SK-N-SH (cell line): ENCODE measurements at regions of chr1 and their contacts with region 1.

Region 1: GRCh38 chr1:48202030-48202752 is 20.3 kb upstream of the SLC5A9 start:
- DNase-seq: peak; percentile 63
- H3K4me3 ChIP-seq: peak overlapping the region in 1 of 2 experiments; percentile 49; a peak in 1 of 4 replicates
- H3K27ac ChIP-seq: no peak overlapping the region
- H3K4me1 ChIP-seq: no peaks in the 10 kb centered on the region
- H3K27me3 ChIP-seq: peaks cover 4% of the 10 kb centered on the region; the same call in 1 of the 2 replicates
- CTCF ChIP-seq: peak; percentile 91
- EP300 ChIP-seq: no peak
- RAD21 ChIP-seq: peak; percentile 82

Region 2: DNA sequence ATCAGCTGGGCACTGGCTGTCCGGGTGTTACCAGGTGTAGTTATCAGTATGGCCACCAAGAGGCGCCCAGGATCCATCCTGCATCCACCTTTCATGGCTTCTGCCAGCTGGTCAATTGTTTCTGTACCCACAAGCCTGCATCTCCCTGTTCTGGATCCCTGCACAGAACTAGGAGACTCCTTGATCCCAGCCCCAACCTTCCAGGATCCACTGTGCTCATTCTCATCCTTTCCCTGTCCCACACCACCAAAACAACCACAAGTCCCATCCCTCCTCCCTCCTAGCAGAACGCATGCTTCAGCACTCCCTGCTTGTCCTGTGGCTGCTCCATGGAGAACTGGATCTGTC is 813.3 kb before region 1 on chr1:
- CTCF ChIA-PET with region 1: no interaction called
- POLR2A ChIA-PET with region 1: no interaction called
- DNase-seq: peak; percentile 80
- H3K4me3 ChIP-seq: no peak overlapping the region
- H3K27ac ChIP-seq: no peak overlapping the region
- H3K4me1 ChIP-seq: peaks cover 0 to 10% of the 10 kb centered on the region in 2 experiments; a peak in 1 of 4 replicates
- H3K27me3 ChIP-seq: no peaks in the 10 kb centered on the region
- CTCF ChIP-seq: peak; percentile 69
- EP300 ChIP-seq: no peak
- RAD21 ChIP-seq: peak; percentile 84

Region 3: GRCh38 chr1:47818682-47819573 is 383.3 kb before region 1 on chr1:
- CTCF ChIA-PET with region 1: no interaction called
- POLR2A ChIA-PET with region 1: no interaction called
- DNase-seq: peak; percentile 53
- H3K4me3 ChIP-seq: no peak overlapping the region
- H3K27ac ChIP-seq: no peak overlapping the region
- H3K4me1 ChIP-seq: peaks cover 0 to 22% of the 10 kb centered on the region in 2 experiments; a peak in 1 of 4 replicates
- H3K27me3 ChIP-seq: no peaks in the 10 kb centered on the region
- CTCF ChIP-seq: no peak
- EP300 ChIP-seq: no peak
- RAD21 ChIP-seq: no peak

Region 4: DNA sequence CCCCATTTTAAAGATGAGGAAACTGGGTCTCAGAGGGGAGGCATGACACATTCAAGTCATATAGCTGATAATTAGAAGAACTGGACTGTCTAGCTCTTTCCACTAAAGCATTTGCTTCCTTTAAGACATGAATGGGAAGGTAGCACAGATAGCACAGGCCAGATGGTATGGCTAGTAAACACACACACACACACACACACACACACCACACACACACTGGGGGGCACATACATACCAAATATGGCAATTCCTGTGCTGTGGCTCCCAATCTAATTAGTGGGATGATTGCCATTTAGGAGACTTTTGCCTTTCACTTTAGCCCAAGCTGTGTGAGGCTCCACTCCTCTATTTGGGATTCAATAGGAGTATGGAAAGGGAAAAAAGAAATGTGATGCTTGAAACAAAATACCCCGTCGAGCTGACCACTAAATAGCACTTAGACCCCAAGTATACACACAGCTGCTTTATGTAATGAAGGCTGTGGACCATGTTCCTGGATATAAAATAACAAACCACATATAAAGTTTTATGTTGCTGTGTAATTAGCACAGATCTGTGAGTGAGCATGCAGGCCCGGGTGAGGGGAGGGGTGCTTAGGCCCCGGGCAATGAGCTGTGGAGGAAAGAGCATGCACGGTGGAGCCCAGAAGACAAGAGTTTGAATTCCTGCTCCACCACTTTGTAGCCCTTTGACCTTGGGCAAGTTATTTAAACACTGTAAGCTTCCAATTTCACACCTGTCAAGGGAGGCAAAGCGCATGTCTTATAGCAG is 198.3 kb before region 1 on chr1:
- CTCF ChIA-PET with region 1: no interaction called
- POLR2A ChIA-PET with region 1: no interaction called
- DNase-seq: no peak
- H3K4me3 ChIP-seq: no peak overlapping the region
- H3K27ac ChIP-seq: no peak overlapping the region
- H3K4me1 ChIP-seq: no peaks in the 10 kb centered on the region
- H3K27me3 ChIP-seq: no peaks in the 10 kb centered on the region; the same call in 1 of the 2 replicates
- CTCF ChIP-seq: no peak
- EP300 ChIP-seq: no peak
- RAD21 ChIP-seq: no peak

Region 5: DNA sequence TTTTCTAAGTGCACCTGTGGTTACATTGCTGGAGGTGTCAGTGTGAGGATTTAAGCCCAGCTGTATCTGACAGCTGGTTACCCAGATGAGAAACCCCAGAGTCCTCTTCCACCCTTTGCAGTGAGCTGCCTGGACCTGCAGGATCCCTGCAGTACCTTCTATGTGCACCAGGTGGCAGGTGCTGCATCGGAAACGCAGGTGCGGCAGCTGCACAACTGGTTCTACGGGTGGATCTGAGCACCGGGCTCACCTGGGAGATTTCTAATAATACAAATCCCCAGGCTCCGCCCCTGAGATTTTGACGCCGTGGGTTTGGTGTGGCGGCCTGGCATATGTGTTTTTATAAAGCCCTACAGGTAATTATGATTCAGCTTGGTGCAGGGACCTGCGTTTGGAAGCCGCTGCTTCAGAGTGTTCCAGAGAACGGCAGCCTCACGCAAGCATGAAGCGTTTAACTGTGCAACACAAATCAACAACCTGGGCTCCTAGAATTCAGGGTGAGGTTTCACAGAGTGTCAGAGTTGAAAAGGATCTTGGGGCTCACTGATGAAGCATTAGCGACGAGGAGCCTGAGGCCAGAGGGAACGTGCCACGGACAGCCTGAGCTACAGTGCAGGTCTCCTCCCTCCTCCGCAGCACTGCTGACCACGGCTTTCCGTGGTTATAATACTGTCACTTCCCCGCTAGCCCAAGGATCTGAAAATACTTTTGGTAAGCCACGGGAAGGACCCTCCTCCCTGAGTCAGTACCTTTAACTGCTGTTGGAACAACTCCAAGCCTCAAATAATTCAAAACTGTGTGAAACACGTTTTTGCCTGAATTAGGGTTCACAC is 108.3 kb before region 1 on chr1:
- CTCF ChIA-PET with region 1: interaction called, 57 read pairs
- POLR2A ChIA-PET with region 1: no interaction called
- DNase-seq: peak; percentile 85
- H3K4me3 ChIP-seq: peak overlapping the region; percentile 7 to 44; a peak in 2 of 4 replicates
- H3K27ac ChIP-seq: no peak overlapping the region
- H3K4me1 ChIP-seq: peaks cover 0 to 3% of the 10 kb centered on the region in 2 experiments; a peak in 1 of 4 replicates
- H3K27me3 ChIP-seq: peaks cover 15% of the 10 kb centered on the region
- CTCF ChIP-seq: peak; percentile 71
- EP300 ChIP-seq: no peak
- RAD21 ChIP-seq: peak; percentile 69

Region 6: DNA sequence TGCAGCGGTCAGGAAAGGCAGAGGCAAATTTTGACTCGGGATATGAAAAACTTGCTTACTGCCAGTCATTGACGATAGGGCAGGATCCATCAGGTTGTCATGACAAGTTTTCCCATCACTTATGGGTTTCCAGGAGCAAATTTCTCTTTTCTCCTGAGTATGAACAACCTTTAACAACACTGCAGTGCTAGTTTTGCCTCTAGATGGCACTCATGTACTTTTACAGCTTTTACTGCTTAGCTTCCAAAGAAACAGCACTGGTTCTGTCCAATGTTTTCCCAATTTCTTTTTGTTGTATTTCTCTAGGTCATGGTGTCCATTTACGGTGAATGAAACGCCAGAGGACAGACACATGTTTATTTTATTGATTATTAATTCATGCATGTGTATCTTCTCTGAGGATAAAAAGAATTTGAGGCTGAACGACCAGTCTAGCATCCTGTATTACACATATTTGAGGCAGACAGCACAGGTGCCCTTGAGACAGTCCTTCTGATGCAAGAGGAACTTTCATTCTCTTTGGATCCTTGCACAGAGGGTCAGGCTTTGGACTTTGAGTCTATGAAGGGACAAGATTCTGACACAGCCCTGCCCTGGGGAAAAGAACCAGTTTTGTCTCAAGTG is 92.7 kb before region 1 on chr1:
- CTCF ChIA-PET with region 1: interaction called, 191 read pairs
- POLR2A ChIA-PET with region 1: no interaction called
- DNase-seq: peak; percentile 36
- H3K4me3 ChIP-seq: no peak overlapping the region
- H3K27ac ChIP-seq: no peak overlapping the region
- H3K4me1 ChIP-seq: no peaks in the 10 kb centered on the region
- H3K27me3 ChIP-seq: no peaks in the 10 kb centered on the region; the same call in 1 of the 2 replicates
- CTCF ChIP-seq: peak; percentile 86
- EP300 ChIP-seq: no peak
- RAD21 ChIP-seq: peak; percentile 93

Region 7: GRCh38 chr1:48120621-48121020 is 81.6 kb before region 1 on chr1:
- CTCF ChIA-PET with region 1: interaction called, 22 read pairs
- POLR2A ChIA-PET with region 1: no interaction called
- DNase-seq: no peak
- H3K4me3 ChIP-seq: no peak overlapping the region
- H3K27ac ChIP-seq: no peak overlapping the region
- H3K4me1 ChIP-seq: no peaks in the 10 kb centered on the region
- H3K27me3 ChIP-seq: no peaks in the 10 kb centered on the region
- CTCF ChIP-seq: no peak
- EP300 ChIP-seq: no peak
- RAD21 ChIP-seq: no peak

Region 8: GRCh38 chr1:48190881-48191280 is 11.3 kb before region 1 on chr1:
- CTCF ChIA-PET with region 1: interaction called, 29 read pairs
- POLR2A ChIA-PET with region 1: no interaction called
- DNase-seq: no peak
- H3K4me3 ChIP-seq: no peak overlapping the region
- H3K27ac ChIP-seq: no peak overlapping the region
- H3K4me1 ChIP-seq: no peaks in the 10 kb centered on the region; a peak in 1 of 4 replicates
- H3K27me3 ChIP-seq: no peaks in the 10 kb centered on the region
- CTCF ChIP-seq: no peak
- EP300 ChIP-seq: no peak
- RAD21 ChIP-seq: no peak

Region 9: DNA sequence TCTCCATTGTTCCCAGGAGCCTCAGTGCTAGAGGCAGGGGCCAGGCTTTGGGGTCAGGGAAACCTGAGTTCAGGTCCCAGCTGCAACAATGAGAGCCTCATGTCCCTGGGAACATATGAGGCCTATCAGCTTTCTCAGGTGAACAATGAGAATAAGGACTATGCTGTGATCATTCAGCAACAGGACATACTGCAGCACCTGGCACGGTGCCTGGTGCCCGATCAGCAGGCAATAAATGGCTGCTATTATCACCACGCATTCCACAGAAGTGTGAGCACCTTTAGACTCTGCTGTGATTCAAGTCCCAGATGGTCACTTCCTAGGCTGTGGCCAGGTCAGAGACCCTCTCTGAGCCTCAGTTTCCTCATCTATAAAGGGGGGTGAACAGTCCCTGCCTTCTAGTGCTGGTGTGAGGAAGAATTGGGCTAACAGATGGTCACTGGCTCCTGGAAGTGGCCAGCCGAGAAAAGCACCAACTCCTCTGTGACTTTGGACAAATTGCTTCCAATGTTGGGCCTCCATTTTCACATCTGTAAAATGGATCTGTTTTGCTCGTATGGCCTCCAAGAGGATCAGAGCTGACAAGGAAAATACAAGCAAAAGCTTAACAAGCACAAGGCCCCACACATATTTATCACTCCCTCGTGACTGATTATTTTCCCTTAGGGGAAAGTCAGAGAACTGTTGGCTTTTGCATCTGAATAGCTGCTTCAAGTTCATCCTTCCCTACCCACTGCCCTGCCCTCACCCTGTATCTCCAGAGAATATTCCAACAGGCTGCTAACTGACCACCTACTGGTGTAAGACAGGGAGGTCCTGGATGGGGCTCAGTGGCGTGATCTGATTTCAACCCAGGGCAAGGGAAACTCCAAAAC is 21.4 kb after region 1 on chr1:
- CTCF ChIA-PET with region 1: interaction called, 20 read pairs
- POLR2A ChIA-PET with region 1: no interaction called
- DNase-seq: no peak
- H3K4me3 ChIP-seq: no peak overlapping the region
- H3K27ac ChIP-seq: no peak overlapping the region
- H3K4me1 ChIP-seq: no peaks in the 10 kb centered on the region
- H3K27me3 ChIP-seq: no peaks in the 10 kb centered on the region
- CTCF ChIP-seq: no peak
- EP300 ChIP-seq: no peak
- RAD21 ChIP-seq: no peak